B cell (primary cell): ENCODE measurements at regions of chr5 and their contacts with region 1.

Region 1: DNA sequence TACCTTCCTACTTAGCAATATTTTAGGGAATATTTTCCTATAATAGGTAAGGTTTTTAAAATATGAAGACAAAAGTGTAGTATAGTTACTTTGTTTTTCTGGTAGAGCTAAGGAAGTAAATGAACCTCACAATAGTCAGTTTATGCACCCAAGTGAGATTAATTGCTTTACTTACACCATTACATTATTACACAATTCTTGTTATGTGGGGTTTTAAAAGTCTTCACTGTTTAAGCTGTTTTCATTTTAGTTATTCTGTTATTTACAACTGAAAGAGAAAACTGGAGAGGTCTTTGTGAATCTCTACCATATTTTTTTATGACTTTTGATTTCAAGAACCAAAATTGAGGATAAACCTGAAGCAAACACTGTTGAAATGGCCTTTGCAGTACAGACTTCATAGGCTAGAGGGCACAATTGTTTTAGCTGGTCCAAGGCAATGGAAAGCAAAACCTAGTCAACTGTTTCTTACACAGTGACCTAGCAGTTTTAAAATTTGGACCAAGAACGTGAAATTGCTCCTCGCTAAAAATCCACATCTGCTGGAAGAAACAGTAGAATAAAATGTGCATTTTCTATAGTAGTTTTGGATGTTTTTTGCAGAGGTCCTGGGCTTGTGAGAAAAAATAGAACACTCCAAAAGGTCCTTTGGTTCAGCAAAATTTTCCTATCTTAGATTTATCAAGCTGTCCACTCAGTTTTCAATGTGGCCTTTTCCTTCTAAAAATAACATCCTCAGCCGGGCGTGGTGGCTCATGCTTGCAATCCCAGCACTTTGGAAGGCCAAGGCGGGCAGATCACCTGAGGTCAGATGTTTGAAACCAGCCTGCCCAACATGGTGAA is 66.4 kb upstream of the FER start:
- DNase-seq: peak; percentile 72
- ATAC-seq: peak; percentile 94
- H3K4me3 ChIP-seq: peak overlapping the region in 1 of 5 experiments; percentile 22
- H3K4me3 Mint-ChIP-seq: peak overlapping the region; percentile 37
- H3K27ac ChIP-seq: no peak overlapping the region
- H3K27ac Mint-ChIP-seq: no peak overlapping the region
- H3K4me1 ChIP-seq: peaks cover 5 to 11% of the 10 kb centered on the region in 2 donors
- H3K4me1 Mint-ChIP-seq: peaks cover 14% of the 10 kb centered on the region
- H3K27me3 ChIP-seq: no peaks in the 10 kb centered on the region
- H3K27me3 Mint-ChIP-seq: peaks cover 3% of the 10 kb centered on the region
- CTCF ChIP-seq: peak; percentile 91

Region 2: GRCh38 chr5:108727651-108728565 is 46.6 kb after region 1 on chr5:
- CTCF ChIA-PET with region 1: interaction called, 16 read pairs
- POLR2A ChIA-PET with region 1: no interaction called
- intact Hi-C with region 1: loop called (anchors 2 kb)
- DNase-seq: peak; percentile 87
- ATAC-seq: peak; percentile 86
- H3K4me3 ChIP-seq: peak overlapping the region; percentile 71 to 98 (median 91)
- H3K4me3 Mint-ChIP-seq: peak overlapping the region; percentile 87
- H3K27ac ChIP-seq: peak overlapping the region; percentile 96
- H3K27ac Mint-ChIP-seq: peak overlapping the region; percentile 94
- H3K4me1 ChIP-seq: peaks cover 32 to 33% of the 10 kb centered on the region in 2 donors
- H3K4me1 Mint-ChIP-seq: peaks cover 44% of the 10 kb centered on the region
- H3K27me3 ChIP-seq: no peaks in the 10 kb centered on the region
- H3K27me3 Mint-ChIP-seq: no peaks in the 10 kb centered on the region
- CTCF ChIP-seq: no peak

Region 3: GRCh38 chr5:108748401-108749127 is 67.3 kb after region 1 on chr5:
- CTCF ChIA-PET with region 1: no interaction called
- POLR2A ChIA-PET with region 1: no interaction called
- intact Hi-C with region 1: loop called (anchors 1 kb)
- DNase-seq: peak; percentile 98
- ATAC-seq: peak; percentile 91
- H3K4me3 ChIP-seq: peak overlapping the region; percentile 74 to 90 (median 83)
- H3K4me3 Mint-ChIP-seq: peak overlapping the region; percentile 92
- H3K27ac ChIP-seq: peak overlapping the region; percentile 91 to 94
- H3K27ac Mint-ChIP-seq: peak overlapping the region; percentile 86
- H3K4me1 ChIP-seq: peaks cover 14 to 17% of the 10 kb centered on the region in 2 donors
- H3K4me1 Mint-ChIP-seq: peaks cover 10% of the 10 kb centered on the region
- H3K27me3 ChIP-seq: no peaks in the 10 kb centered on the region
- H3K27me3 Mint-ChIP-seq: no peaks in the 10 kb centered on the region
- CTCF ChIP-seq: no peak

Region 4: DNA sequence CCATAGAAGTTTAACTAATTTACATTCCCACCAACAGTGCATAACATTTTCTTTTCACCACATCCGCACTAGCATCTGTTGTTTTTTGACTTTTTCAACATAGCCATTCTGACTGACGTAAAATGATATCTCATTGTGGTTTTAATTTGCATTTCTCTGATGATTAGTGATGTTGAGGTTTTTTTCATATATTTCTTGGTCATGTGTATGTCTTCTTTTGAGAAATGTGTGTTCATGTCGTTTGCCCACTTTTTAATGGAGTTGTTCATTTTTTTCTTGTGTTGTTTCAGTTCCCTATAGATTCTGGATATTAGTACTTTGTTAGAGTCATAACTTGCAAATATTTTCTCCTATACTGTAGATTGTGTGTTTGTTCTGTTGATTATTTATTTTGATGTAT is 229.8 kb after region 1 on chr5:
- CTCF ChIA-PET with region 1: no interaction called
- POLR2A ChIA-PET with region 1: no interaction called
- intact Hi-C with region 1: loop called (anchors 2 kb)
- DNase-seq: peak; percentile 26
- ATAC-seq: peak; percentile 69
- H3K4me3 ChIP-seq: no peak overlapping the region
- H3K4me3 Mint-ChIP-seq: peak overlapping the region; percentile 12
- H3K27ac ChIP-seq: no peak overlapping the region
- H3K27ac Mint-ChIP-seq: peak overlapping the region; percentile 62
- H3K4me1 ChIP-seq: no peaks in the 10 kb centered on the region
- H3K4me1 Mint-ChIP-seq: peaks cover 14% of the 10 kb centered on the region
- H3K27me3 ChIP-seq: no peaks in the 10 kb centered on the region
- H3K27me3 Mint-ChIP-seq: no peaks in the 10 kb centered on the region
- CTCF ChIP-seq: no peak

Region 5: GRCh38 chr5:109439590-109439989 is 758.3 kb after region 1 on chr5:
- CTCF ChIA-PET with region 1: interaction called, 6 read pairs
- POLR2A ChIA-PET with region 1: no interaction called
- intact Hi-C with region 1: loop called (anchors 1 kb)
- DNase-seq: no peak
- ATAC-seq: no peak
- H3K4me3 ChIP-seq: no peak overlapping the region
- H3K4me3 Mint-ChIP-seq: no peak overlapping the region
- H3K27ac ChIP-seq: no peak overlapping the region
- H3K27ac Mint-ChIP-seq: no peak overlapping the region
- H3K4me1 ChIP-seq: no peaks in the 10 kb centered on the region
- H3K4me1 Mint-ChIP-seq: no peaks in the 10 kb centered on the region
- H3K27me3 ChIP-seq: no peaks in the 10 kb centered on the region
- H3K27me3 Mint-ChIP-seq: peaks cover 4% of the 10 kb centered on the region
- CTCF ChIP-seq: no peak

Region 6: GRCh38 chr5:109479260-109479860 is 798.1 kb after region 1 on chr5:
- CTCF ChIA-PET with region 1: no interaction called
- POLR2A ChIA-PET with region 1: no interaction called
- intact Hi-C with region 1: loop called (anchors 1 kb)
- DNase-seq: peak; percentile 22
- ATAC-seq: no peak
- H3K4me3 ChIP-seq: no peak overlapping the region
- H3K4me3 Mint-ChIP-seq: no peak overlapping the region
- H3K27ac ChIP-seq: no peak overlapping the region
- H3K27ac Mint-ChIP-seq: no peak overlapping the region
- H3K4me1 ChIP-seq: peaks cover 0 to 4% of the 10 kb centered on the region in 2 donors
- H3K4me1 Mint-ChIP-seq: peaks cover 1% of the 10 kb centered on the region
- H3K27me3 ChIP-seq: no peaks in the 10 kb centered on the region
- H3K27me3 Mint-ChIP-seq: peaks cover 10% of the 10 kb centered on the region
- CTCF ChIP-seq: peak; percentile 59